ENCODE measurements at regions of chrX and their contacts with region 1.

Region 1: DNA sequence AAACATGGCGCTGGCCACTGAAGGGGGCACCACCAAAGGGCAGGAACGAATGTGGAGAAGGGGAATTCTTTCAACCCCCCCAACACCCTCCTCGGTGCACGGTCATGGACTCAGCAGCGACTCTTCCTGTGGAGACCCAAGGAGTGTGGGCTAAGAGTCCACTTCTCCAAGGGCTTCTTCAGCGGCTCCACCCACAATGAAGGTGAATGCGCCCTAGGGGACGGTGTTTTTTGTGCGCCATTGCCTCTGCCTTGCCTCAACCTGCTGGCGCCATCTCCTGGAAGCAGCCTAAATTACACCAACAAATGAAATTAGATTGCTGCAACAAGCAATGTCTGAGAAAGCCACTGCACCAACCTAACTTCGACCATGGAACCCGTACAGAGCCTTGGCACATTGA is 169.2 kb upstream of the MAGEB18 start:
- DNase-seq: no peak
- ATAC-seq: no peak

Region 2: GRCh38 chrX:26008691-26009090 is 39.8 kb after region 1 on chrX:
- intact Hi-C with region 1: no loop called
- DNase-seq: no peak
- ATAC-seq: no peak

Region 3: GRCh38 chrX:27815209-27815608 is 1846.3 kb after region 1 on chrX:
- intact Hi-C with region 1: loop called (anchors 10 kb)
- DNase-seq: no peak
- ATAC-seq: no peak